Prostate gland (tissue), 2 donors: ENCODE measurements at regions of chr5 and their contacts with region 1.

Region 1: GRCh38 chr5:33936004-33936380 is 194 bp upstream of the RXFP3 start:
- DNase-seq: peak; percentile 21
- H3K4me3 ChIP-seq: peak overlapping the region in 1 of 2 donors; percentile 2
- H3K27ac ChIP-seq: no peak overlapping the region
- H3K4me1 ChIP-seq: no peaks in the 10 kb centered on the region
- H3K27me3 ChIP-seq: peaks cover 27% of the 10 kb centered on the region
- CTCF ChIP-seq: peak in 1 of 4 experiments; percentile 21
- POLR2A ChIP-seq: no peak

Region 2: DNA sequence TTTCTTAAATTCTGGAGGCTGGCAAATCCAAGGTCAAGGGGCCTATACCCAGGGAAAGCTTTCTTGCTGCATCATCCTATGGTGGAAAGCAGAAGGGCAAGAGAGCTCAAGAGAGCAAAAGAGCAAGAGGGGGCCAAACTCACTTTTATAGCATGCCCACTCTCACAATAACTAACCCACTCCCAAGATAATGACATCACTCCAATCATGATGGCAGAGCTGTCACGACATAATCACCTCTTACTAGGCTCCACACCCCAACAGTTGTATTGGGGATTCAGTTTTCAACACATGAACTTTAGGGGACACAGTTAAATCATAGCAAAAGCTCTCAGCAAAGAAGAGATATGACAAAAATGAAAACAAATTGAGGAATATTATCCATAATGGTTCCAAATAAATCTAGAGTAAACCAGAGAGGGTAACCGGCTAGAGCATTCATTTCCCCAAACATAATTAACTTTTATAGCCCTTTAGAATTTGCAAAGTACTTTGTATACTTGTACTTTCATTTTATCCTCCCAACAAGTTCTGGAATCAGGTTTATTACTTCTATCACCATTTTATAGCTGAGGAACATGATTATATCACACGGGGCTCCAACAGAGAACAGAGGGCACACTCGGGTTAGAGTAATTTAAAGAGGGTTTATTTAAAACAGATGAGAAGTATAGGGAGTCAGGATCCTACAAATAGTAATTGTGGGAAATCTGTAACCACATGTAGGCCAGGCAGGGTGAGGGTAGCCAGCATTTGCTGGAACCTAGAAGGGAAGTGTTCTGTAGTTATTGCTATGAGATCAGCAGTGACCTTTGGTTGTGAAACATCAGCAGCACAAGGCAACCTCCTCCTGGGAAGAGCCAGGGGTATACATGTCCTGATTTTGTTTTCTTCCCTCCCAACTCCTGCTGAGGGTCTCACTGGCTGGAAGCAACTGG is 502.4 kb before region 1 on chr5:
- intact Hi-C with region 1: loop called (anchors 5 kb)
- DNase-seq: no peak
- H3K4me3 ChIP-seq: no peak overlapping the region
- H3K27ac ChIP-seq: no peak overlapping the region
- H3K4me1 ChIP-seq: no peaks in the 10 kb centered on the region
- H3K27me3 ChIP-seq: no peaks in the 10 kb centered on the region
- CTCF ChIP-seq: no peak
- POLR2A ChIP-seq: no peak

Region 3: DNA sequence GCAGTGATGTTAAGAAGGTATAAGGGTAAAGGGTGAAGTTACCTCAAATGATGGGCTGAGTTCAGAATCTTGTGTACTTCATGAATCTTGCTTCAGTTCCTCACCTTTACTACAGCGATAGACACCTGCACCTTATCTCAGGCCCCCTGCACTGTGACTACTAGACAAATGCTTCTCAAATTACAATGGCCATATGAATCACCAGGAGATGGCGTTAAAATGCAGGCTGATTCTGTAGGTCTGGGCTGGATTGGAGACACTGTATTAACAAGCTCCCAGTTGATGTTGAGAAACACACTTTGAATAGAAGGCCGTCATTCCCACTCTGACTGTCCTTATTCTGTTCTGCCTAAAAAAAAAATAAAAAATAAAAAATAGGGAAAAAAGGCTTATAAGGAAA is 465.4 kb before region 1 on chr5:
- intact Hi-C with region 1: loop called (anchors 10 kb)
- DNase-seq: no peak
- H3K4me3 ChIP-seq: no peak overlapping the region
- H3K27ac ChIP-seq: no peak overlapping the region
- H3K4me1 ChIP-seq: no peaks in the 10 kb centered on the region
- H3K27me3 ChIP-seq: no peaks in the 10 kb centered on the region
- CTCF ChIP-seq: peak in 2 of 4 experiments; percentile 19 to 44
- POLR2A ChIP-seq: no peak

Region 4: GRCh38 chr5:34062419-34062818 is 126.4 kb after region 1 on chr5:
- intact Hi-C with region 1: no loop called
- DNase-seq: no peak
- H3K4me3 ChIP-seq: no peak overlapping the region
- H3K27ac ChIP-seq: no peak overlapping the region
- H3K4me1 ChIP-seq: no peaks in the 10 kb centered on the region
- H3K27me3 ChIP-seq: no peaks in the 10 kb centered on the region
- CTCF ChIP-seq: no peak
- POLR2A ChIP-seq: no peak